ENCODE measurements at regions of chr19 and their contacts with region 1.

Region 1: GRCh38 chr19:4400135-4400936 is at the start of gene SH3GL1:
- DNase-seq: peak; percentile 74 to 96
- H3K4me3 ChIP-seq: peak within 1 kb of the TSS; percentile 82 to 96
- H3K27ac ChIP-seq: peak within 1 kb of the TSS; percentile 89 to 91
- H3K4me1 ChIP-seq: peaks cover 7 to 12% of the 10 kb centered on the region in 2 donors
- H3K27me3 ChIP-seq: no peaks in the 10 kb centered on the region
- CTCF ChIP-seq: peak; percentile 91 to 99 (median 96)
- total RNA-seq, gene SH3GL1: 61.4 TPM

Region 2: DNA sequence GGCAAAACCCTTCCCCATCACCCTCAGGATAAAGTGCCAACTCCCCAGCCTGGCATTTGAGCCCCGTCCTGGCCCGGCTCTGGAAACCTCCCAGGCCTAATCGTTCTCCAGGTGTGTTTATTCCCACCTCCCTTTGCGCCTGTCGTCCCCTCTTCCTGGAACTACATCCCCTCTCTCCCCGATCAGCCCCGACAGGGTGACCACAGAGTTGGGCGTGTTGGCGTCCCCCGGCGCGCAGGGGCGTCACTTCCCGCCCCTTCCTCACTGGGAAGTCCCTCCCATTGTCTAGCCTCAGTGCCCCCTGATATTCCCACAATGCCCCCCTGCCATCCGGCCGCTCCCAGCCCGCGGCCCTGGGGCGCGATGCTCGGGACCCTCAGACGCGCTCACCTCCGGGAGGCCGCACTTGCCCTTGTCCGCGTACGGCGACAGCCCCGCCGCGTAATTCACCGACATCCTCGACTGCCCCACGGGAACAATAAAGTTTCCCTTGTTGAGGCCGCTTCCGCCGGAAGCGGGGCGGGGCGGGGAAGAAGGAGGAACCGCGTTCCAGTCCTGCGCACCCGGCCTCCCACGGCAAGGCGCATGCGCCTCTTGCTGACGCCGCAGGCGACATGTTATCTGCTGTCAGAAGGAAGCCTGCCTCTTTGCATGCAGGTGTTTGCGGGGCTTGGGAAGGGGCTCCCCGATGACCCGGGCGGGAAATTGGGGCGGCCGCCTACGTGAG is 218.1 kb before region 1 on chr19 and contains the starts of genes ANKRD24 and SIRT6:
- intact Hi-C with region 1: loop called (anchors 2 kb)
- DNase-seq: peak; percentile 78 to 97
- H3K4me3 ChIP-seq: peak within 1 kb of the TSS; percentile 75 to 96
- H3K27ac ChIP-seq: peak within 1 kb of the TSS; percentile 65 to 74
- H3K4me1 ChIP-seq: peaks cover 12 to 14% of the 10 kb centered on the region in 2 donors
- H3K27me3 ChIP-seq: no peaks in the 10 kb centered on the region
- CTCF ChIP-seq: no peak
- total RNA-seq, gene ANKRD24: not detected
- total RNA-seq, gene SIRT6: 5.9 TPM

Region 3: GRCh38 chr19:4267101-4267900 is 133.0 kb before region 1 on chr19:
- intact Hi-C with region 1: loop called (anchors 2 kb)
- DNase-seq: peak in 1 of 2 donors; percentile 69
- H3K4me3 ChIP-seq: no peak overlapping the region
- H3K27ac ChIP-seq: no peak overlapping the region
- H3K4me1 ChIP-seq: no peaks in the 10 kb centered on the region
- H3K27me3 ChIP-seq: no peaks in the 10 kb centered on the region
- CTCF ChIP-seq: peak; percentile 77 to 91 (median 79)

Region 4: DNA sequence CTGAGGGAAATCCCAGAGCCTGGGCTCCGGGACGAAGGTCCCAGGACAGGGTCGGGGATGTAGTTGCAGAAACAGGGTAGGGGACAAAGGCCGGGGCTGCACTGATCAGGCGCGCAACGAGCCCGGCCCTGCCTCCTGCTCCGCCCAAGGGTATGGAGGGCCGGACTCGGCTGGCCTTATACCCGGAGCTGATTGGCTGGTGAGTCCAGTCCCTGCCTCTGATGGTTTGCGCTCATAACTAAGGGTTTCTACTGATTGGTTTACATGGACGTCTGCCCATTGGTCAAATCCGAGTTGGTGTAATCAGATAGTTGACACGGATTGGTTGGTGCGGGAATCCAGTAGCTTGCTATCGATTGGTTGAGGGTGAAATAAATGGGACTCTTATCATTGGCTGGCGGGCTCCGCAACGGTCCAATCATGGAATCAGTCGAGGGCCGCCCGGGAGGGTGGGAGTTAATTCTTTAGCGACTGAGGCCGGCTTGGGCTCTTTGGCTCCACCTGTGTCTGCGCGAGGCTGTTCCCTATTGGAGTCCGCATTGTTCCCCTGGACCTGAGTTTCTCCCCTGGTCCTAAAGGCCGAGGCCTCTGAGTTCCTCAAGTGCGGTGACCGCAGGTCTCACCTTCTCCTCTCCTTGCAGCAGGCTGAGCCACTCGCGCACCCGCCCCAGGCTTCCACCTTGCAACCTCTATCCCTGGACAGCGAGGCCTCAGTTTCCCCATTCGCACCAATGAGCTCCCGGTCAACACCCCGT is 57.5 kb before region 1 on chr19:
- intact Hi-C with region 1: loop called (anchors 1 kb)
- DNase-seq: peak; percentile 94 to 99
- H3K4me3 ChIP-seq: peak overlapping the region; percentile 68 to 94
- H3K27ac ChIP-seq: peak overlapping the region; percentile 80 to 87
- H3K4me1 ChIP-seq: peaks cover 3 to 8% of the 10 kb centered on the region in 2 donors
- H3K27me3 ChIP-seq: no peaks in the 10 kb centered on the region
- CTCF ChIP-seq: peak in 2 of 3 experiments; percentile 27 to 29

Region 5: GRCh38 chr19:4457654-4458395 is 57.5 kb after region 1 on chr19 and contains the start of gene UBXN6:
- intact Hi-C with region 1: loop called (anchors 1 kb)
- DNase-seq: peak; percentile 88 to 99
- H3K4me3 ChIP-seq: peak within 1 kb of the TSS; percentile 86 to 99
- H3K27ac ChIP-seq: peak within 1 kb of the TSS; percentile 87 to 91
- H3K4me1 ChIP-seq: peaks cover 6 to 20% of the 10 kb centered on the region in 2 donors
- H3K27me3 ChIP-seq: no peaks in the 10 kb centered on the region
- CTCF ChIP-seq: no peak
- total RNA-seq, gene UBXN6: 560 TPM

Measured in ascending aorta (tissue), 2 donors.